Activated CD4-positive, alpha-beta memory T cell treated with anti-CD3 and anti-CD28 coated beads for 36 hours (primary cell): ENCODE measurements at regions of chr21 and their contacts with region 1.

Region 1: GRCh38 chr21:25350056-25350455 is 257.2 kb downstream of the MRPL39 start:
- DNase-seq: peak; percentile 61
- H3K4me3 Mint-ChIP-seq: no peak overlapping the region
- H3K27ac Mint-ChIP-seq: no peak overlapping the region
- H3K4me1 Mint-ChIP-seq: peaks cover 5% of the 10 kb centered on the region
- H3K27me3 Mint-ChIP-seq: peaks cover 14% of the 10 kb centered on the region

Region 2: GRCh38 chr21:25360593-25360992 is 10.5 kb after region 1 on chr21:
- CTCF ChIA-PET with region 1: interaction called, 20 read pairs
- POLR2A ChIA-PET with region 1: no interaction called
- intact Hi-C with region 1: no loop called
- DNase-seq: peak; percentile 13
- H3K4me3 Mint-ChIP-seq: no peak overlapping the region
- H3K27ac Mint-ChIP-seq: no peak overlapping the region
- H3K4me1 Mint-ChIP-seq: peaks cover 18% of the 10 kb centered on the region
- H3K27me3 Mint-ChIP-seq: peaks cover 2% of the 10 kb centered on the region